Esophagus muscularis mucosa (tissue), 4 donors: ENCODE measurements at regions of chr9 and their contacts with region 1.

Region 1: GRCh38 chr9:21812946-21813568 is 10.6 kb downstream of the MTAP start:
- DNase-seq: no peak
- H3K4me3 ChIP-seq: no peak overlapping the region
- H3K27ac ChIP-seq: peak overlapping the region in 3 of 4 donors; percentile 1 to 35 (median 5)
- H3K4me1 ChIP-seq: peaks cover 35 to 55% (median 45%) of the 10 kb centered on the region in 4 donors
- H3K27me3 ChIP-seq: no peaks in the 10 kb centered on the region
- CTCF ChIP-seq: peak; percentile 80 to 84 (median 84)
- EP300 ChIP-seq: no peak
- POLR2A ChIP-seq: no peak

Region 2: DNA sequence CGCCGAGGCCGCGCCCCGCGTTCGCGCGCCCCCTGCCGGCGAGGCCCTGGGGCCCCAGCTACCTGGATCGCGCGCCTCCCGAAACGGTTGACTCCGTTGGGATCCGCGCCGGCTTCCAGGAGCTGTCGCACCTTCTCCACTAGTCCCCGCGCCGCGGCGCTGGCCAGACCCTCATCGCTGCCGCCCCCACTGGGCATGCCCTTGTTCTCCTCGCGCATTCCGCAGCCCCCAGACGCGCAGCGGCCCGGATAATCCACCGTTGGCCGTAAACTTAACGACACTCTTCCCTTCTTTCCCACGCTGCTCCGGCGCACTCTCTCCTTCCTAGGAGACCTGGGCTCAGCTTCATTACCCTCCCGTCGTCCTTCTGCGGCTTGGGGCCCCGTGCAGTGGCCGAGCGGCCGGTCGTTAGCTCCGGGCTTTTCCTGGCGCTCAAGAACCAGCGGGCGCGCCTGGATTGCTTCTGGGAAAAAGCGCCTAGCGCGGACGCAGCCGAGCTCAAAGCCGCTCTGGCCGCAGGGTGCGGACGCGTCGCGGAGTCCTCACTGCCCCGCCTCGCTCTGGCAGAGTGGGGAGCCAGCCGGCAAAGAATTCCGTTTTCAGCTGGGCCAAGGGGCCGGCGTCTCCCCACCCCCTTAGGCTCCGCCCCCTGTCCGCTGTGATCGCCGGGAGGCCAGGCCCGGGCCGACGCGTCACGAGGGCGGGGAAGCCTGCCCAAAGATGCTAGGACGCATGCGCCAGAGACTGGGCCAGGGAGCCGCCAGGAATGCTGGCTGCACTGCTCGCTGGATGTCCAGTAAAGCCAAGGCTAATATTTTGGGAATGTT is 195.9 kb after region 1 on chr9 and contains the start of gene CDKN2B:
- intact Hi-C with region 1: loop called (anchors 2 kb)
- DNase-seq: peak; percentile 96
- H3K4me3 ChIP-seq: peak within 1 kb of the TSS; percentile 70 to 77 (median 73)
- H3K27ac ChIP-seq: peak within 1 kb of the TSS; percentile 84 to 94 (median 91)
- H3K4me1 ChIP-seq: peaks cover 12 to 33% (median 19%) of the 10 kb centered on the region in 4 donors
- H3K27me3 ChIP-seq: peaks cover 0 to 33% (median 2%) of the 10 kb centered on the region in 4 donors
- CTCF ChIP-seq: peak; percentile 78 to 91 (median 90)
- EP300 ChIP-seq: no peak
- POLR2A ChIP-seq: peak; percentile 38
- total RNA-seq, gene CDKN2B: 9.9 to 14.6 (median 12.2) TPM

Region 3: GRCh38 chr9:22037954-22038690 is 225.1 kb after region 1 on chr9:
- intact Hi-C with region 1: loop called (anchors 10 kb)
- DNase-seq: no peak
- H3K4me3 ChIP-seq: no peak overlapping the region
- H3K27ac ChIP-seq: no peak overlapping the region
- H3K4me1 ChIP-seq: peaks cover 0 to 17% (median 3%) of the 10 kb centered on the region in 4 donors
- H3K27me3 ChIP-seq: no peaks in the 10 kb centered on the region
- CTCF ChIP-seq: peak; percentile 35 to 49 (median 48)
- EP300 ChIP-seq: no peak
- POLR2A ChIP-seq: no peak

Region 4: DNA sequence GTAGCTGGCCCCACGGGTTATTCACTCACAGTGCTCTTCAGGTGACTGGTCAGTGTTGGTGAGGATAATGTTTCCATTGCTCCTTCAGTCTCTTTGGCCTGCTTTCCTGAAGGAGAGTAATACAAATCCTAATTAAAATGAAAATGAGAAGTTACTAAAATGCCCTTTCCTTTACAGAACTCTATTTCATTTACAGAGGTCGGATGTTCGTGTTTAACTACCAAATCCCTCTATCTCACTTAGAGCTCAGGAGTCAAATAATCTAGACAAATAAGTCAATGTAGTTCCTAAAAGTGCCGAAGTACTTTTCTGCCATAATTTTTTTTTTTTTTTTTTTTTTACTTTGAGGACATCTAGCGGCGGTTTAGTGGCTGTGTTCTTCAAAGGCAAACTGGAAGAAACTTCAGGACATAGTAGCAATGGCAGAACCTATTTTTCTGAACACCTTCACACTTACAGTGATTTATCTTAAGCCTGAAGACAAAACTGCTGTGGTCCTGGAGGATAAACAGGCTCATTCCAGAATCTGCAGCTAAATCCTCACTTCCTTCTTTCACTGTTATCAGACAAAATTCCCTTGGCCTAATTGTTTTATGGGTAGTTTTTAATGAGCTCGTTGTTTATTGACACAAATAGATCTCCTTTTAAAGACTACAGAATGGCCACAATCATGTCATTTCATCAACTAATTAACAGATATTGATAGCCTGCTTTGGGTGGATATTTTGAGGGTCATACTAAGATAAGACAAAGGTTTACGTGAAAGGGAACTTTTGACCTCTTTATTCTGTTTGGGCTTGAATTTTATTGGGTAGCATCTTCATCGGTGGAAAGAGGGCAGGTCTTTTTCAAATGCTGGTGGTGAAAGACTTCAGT is 426.0 kb after region 1 on chr9:
- intact Hi-C with region 1: loop called (anchors 5 kb)
- DNase-seq: no peak
- H3K4me3 ChIP-seq: no peak overlapping the region
- H3K27ac ChIP-seq: no peak overlapping the region
- H3K4me1 ChIP-seq: peaks cover 0 to 8% (median 0%) of the 10 kb centered on the region in 4 donors
- H3K27me3 ChIP-seq: no peaks in the 10 kb centered on the region
- CTCF ChIP-seq: peak; percentile 23 to 51 (median 36)
- EP300 ChIP-seq: no peak
- POLR2A ChIP-seq: no peak

Region 5: GRCh38 chr9:22452415-22453010 is 639.5 kb after region 1 on chr9:
- intact Hi-C with region 1: loop called (anchors 5 kb)
- DNase-seq: no peak
- H3K4me3 ChIP-seq: no peak overlapping the region
- H3K27ac ChIP-seq: no peak overlapping the region
- H3K4me1 ChIP-seq: peaks cover 2 to 29% (median 20%) of the 10 kb centered on the region in 4 donors
- H3K27me3 ChIP-seq: no peaks in the 10 kb centered on the region
- CTCF ChIP-seq: peak; percentile 76 to 86 (median 81)
- EP300 ChIP-seq: no peak
- POLR2A ChIP-seq: no peak